ENCODE measurements at regions of chr11 and their contacts with region 1.

Region 1: DNA sequence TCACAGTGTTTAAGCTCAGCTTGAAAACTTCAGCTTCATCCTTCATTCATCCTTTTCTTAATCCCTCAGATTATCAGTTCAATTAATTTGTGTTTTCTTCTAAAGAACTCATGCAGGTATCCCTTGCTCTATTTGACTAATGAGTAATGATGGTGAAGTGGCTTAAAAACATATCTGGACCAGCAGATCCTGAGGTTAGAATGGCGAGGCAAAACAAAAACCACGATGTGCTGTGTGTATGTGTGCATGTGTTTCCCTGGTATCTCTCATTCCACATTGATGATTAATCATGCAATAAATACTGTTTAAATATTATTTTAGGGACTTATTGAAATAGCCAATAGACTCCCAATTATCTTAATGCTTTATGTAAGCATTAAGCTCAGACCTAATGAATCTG is 437.0 kb downstream of the DYNC2H1 start:
- DNase-seq: no peak
- ATAC-seq: no peak
- H3K4me3 ChIP-seq: no peak overlapping the region
- H3K27ac ChIP-seq: peak overlapping the region in 2 of 12 donors; percentile 6 to 41
- H3K4me1 ChIP-seq: peaks cover 0 to 8% (median 0%) of the 10 kb centered on the region in 12 donors
- H3K27me3 ChIP-seq: no peaks in the 10 kb centered on the region
- CTCF ChIP-seq: no peak
- POLR2A ChIP-seq: no peak

Region 2: GRCh38 chr11:103586756-103587155 is 40.5 kb after region 1 on chr11:
- intact Hi-C with region 1: loop called in 1 of 10 experiments (anchors 5 kb)
- DNase-seq: no peak
- ATAC-seq: peak in 1 of 4 donors; percentile 39
- H3K4me3 ChIP-seq: no peak overlapping the region
- H3K27ac ChIP-seq: no peak overlapping the region
- H3K4me1 ChIP-seq: peaks cover 0 to 5% (median 0%) of the 10 kb centered on the region in 12 donors
- H3K27me3 ChIP-seq: no peaks in the 10 kb centered on the region
- CTCF ChIP-seq: no peak
- POLR2A ChIP-seq: no peak

Measured in heart left ventricle (tissue), 16 donors.